Common myeloid progenitor, CD34-positive (primary cell): ENCODE measurements at regions of chr12 and their contacts with region 1.

Region 1: DNA sequence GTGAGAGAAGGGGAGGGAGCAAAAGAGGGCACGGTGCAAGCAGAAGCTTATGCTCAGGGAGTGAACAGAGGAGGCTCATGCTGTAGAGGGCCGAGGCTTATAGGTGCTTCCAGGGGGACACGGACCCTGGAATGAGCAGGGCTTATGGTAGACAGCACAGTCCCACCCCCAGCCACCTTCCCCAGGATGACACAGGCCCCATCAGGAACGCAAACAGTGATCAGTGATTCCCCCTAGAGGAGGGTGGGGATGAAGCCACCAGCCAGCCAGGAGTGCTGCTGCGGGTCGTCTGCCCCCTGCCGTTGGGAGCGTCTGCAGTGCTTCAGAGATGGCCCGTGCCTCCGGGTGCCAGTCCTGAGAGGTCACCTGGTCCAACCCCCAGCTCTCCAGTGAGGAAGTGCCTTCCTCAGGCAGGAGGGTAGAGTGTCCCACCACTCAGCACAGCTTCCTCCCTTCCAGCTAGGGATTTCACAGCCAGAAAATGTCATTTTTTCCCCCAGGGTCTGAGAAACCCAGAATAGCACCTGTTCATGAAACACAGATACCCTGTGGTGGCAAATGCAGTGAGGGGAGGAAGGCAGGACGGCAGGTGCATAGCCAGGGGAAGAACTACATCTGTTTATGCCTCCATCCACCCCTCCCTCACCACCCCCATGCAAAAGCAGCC is 60.7 kb downstream of the SLC6A12 start:
- DNase-seq: peak; percentile 80 to 86 (median 82)
- H3K4me3 ChIP-seq: no peak overlapping the region
- H3K27ac ChIP-seq: no peak overlapping the region
- H3K4me1 ChIP-seq: peaks cover 0 to 12% (median 7%) of the 10 kb centered on the region in 4 experiments
- H3K27me3 ChIP-seq: no peaks in the 10 kb centered on the region

Region 2: DNA sequence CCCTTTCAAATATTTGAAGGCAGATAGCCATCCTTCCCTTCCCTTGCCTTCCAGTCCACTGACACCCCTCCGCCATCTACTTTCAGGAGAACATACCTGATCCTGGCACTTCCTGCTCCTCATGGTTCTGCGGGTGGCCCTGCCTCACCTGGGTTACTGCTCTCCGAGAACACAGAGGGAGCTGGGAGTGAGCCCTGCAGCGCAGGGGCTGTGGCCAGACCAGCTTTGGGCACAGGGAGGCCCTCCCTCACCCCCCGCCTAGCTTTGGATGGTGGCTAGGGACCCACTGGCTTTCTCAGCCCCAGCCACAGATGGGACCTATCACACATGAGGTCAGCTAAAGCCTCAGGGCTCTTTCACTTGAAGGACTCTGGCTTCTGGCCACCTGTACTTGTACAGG is 74.2 kb before region 1 on chr12:
- CTCF ChIA-PET with region 1: interaction called, 12 read pairs
- POLR2A ChIA-PET with region 1: no interaction called
- DNase-seq: no peak
- H3K4me3 ChIP-seq: no peak overlapping the region
- H3K27ac ChIP-seq: no peak overlapping the region
- H3K4me1 ChIP-seq: peaks cover 0 to 17% (median 5%) of the 10 kb centered on the region in 4 experiments
- H3K27me3 ChIP-seq: peaks cover 0 to 10% (median 0%) of the 10 kb centered on the region in 5 experiments

Region 3: GRCh38 chr12:106118-106591 is 47.1 kb before region 1 on chr12:
- CTCF ChIA-PET with region 1: interaction called, 16 read pairs
- POLR2A ChIA-PET with region 1: no interaction called
- DNase-seq: peak in 2 of 3 donors; percentile 60 to 69
- H3K4me3 ChIP-seq: no peak overlapping the region
- H3K27ac ChIP-seq: no peak overlapping the region
- H3K4me1 ChIP-seq: peaks cover under 1 to 66% (median 33%) of the 10 kb centered on the region in 4 experiments
- H3K27me3 ChIP-seq: no peaks in the 10 kb centered on the region

Region 4: GRCh38 chr12:138898-139534 is 14.2 kb before region 1 on chr12:
- CTCF ChIA-PET with region 1: interaction called, 40 read pairs
- POLR2A ChIA-PET with region 1: no interaction called
- DNase-seq: peak in 2 of 3 donors; percentile 50 to 60
- H3K4me3 ChIP-seq: peak overlapping the region in 5 of 7 experiments; percentile 26 to 75 (median 56)
- H3K27ac ChIP-seq: no peak overlapping the region
- H3K4me1 ChIP-seq: peaks cover 0 to 34% (median 17%) of the 10 kb centered on the region in 4 experiments
- H3K27me3 ChIP-seq: peaks cover 0 to 5% (median 0%) of the 10 kb centered on the region in 5 experiments

Region 5: DNA sequence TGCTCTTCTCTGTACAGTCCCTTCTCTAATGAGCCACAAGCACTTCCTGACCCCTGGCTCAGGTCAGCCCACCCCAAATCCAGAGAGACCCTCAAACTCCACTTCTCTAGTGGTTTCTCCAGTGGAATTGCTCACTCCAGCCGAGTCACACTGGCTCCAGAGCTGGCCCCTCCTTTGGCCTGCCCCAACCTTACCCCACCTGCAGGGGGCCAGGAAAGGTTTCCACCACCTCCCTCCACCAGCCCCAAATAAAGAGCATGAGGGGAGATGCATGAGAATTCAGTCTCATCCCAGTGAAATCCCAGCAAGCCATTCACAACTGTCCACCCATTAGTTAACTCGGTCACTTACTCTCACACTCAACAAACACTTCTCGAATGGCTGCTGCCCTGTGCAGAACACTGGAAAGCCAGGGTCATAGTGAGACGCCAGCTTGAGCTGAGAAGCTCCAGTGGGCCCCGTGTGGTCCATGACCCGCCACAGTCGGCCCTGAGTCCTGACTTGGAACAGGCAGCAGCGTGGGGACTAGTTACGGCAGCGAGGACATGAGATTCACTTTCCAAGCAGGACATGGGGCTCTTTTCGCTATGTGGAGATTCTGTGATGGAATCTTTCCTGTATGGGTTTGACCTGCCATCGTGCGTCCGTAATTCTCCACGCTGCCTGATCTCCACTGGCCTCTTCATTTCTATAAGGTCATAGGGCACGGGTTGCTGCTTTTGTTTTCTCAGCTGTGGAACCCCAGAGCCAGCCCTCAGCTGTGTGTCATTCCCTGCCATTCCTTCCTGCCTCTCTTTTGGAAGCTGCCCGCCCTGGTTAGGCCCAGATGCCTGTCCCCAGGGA is 16.5 kb after region 1 on chr12:
- CTCF ChIA-PET with region 1: interaction called, 31 read pairs
- POLR2A ChIA-PET with region 1: interaction called, 3 read pairs
- DNase-seq: peak in 2 of 3 donors; percentile 37 to 42
- H3K4me3 ChIP-seq: peak overlapping the region in 1 of 7 experiments; percentile 57
- H3K27ac ChIP-seq: no peak overlapping the region
- H3K4me1 ChIP-seq: peaks cover 0 to 85% (median 54%) of the 10 kb centered on the region in 4 experiments
- H3K27me3 ChIP-seq: no peaks in the 10 kb centered on the region